Activated B cell treated with CpG ODN at 0.5 μM for 24 hours (primary cell): ENCODE measurements at regions of chr5 and their contacts with region 1.

Region 1: DNA sequence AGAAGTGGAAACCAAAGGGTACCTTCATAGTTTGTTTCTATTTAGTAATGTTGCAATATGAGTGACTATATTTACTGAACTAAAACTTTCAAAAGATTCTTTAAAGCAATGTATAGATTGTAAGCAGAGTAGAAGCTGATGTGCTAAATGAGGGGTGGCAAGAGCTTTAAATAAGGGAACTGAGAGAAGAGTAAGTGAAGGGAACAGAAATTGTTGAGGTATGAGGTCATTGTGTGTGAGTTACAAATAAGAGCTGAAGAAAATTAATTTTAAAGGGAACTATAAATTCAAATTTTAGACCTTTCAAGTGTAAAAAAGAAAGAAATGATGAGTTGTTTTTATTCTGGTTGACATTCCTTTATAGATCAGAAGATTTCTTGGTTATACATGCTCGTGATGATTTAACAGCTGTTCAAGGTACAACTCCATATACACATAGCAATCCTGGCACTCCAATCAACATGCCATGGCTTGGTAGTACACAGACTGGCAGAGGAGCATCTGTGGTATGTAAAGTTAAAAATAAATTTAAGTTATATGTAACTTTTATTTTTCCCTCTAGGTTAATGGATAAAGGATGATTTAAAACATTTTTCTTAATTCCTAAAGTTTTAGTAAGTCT is 135.1 kb upstream of the TNFAIP8 start:
- DNase-seq: no peak
- ATAC-seq: peak; percentile 97
- H3K4me3 Mint-ChIP-seq: peak overlapping the region; percentile 4
- H3K27ac Mint-ChIP-seq: peak overlapping the region; percentile 47
- H3K4me1 Mint-ChIP-seq: peaks cover 25% of the 10 kb centered on the region
- H3K27me3 Mint-ChIP-seq: no peaks in the 10 kb centered on the region
- CTCF ChIP-seq: no peak

Region 2: DNA sequence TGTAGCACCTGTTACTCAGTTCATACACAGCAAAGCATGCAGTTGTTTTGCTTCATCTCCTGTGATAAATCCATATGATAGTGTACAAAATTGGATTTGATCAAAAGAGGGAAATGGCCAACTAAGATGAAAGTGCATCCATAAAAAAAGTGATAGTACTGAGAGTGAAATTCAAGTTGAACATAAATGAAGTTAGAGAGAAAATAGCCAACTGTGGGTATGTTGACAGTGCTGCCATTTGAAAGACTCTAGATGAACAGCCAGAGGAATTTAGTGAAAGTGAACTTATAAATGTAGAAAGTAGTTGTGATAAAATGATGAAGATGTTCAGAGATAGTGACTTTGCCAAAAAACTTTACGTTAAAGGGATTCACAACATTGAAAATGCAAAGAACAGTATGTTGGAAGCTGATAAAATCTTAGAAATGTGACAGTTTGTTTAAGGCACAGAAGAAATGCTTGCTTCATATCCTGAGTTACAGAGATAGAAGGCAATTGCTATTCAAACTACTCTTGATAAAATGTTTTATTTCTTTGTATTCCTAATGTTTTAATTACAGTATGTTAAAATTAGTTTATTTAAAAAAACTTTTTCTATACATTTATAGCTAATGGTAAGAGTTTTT is 30.1 kb before region 1 on chr5:
- CTCF ChIA-PET with region 1: no interaction called
- POLR2A ChIA-PET with region 1: no interaction called
- intact Hi-C with region 1: loop called (anchors 2 kb)
- DNase-seq: no peak
- ATAC-seq: no peak
- H3K4me3 Mint-ChIP-seq: no peak overlapping the region
- H3K27ac Mint-ChIP-seq: no peak overlapping the region
- H3K4me1 Mint-ChIP-seq: peaks cover 20% of the 10 kb centered on the region
- H3K27me3 Mint-ChIP-seq: no peaks in the 10 kb centered on the region
- CTCF ChIP-seq: no peak

Region 3: DNA sequence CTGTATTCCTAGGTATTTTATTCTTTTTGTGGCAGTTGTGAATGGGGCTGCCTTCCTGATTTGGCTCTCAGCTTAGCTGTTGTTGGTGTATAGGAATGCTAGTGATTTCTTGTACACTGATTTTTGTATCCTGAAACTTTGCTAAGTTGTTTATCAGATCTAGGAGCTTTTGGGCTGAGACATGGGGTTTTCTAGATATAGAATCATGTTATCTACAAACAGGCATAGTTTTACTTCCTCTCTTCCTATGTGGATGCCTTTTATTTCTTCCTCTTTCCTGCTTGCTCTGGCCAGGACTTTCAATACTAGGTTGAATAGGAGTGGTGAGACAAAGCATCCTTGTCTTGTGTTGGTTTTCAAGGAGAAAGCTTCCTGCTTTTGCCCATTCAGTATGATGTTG is 19.9 kb before region 1 on chr5:
- CTCF ChIA-PET with region 1: interaction called, 4 read pairs
- POLR2A ChIA-PET with region 1: no interaction called
- intact Hi-C with region 1: loop called (anchors 1 kb)
- DNase-seq: no peak
- ATAC-seq: no peak
- H3K4me3 Mint-ChIP-seq: peak overlapping the region; percentile 11
- H3K27ac Mint-ChIP-seq: peak overlapping the region; percentile 70
- H3K4me1 Mint-ChIP-seq: peaks cover 32% of the 10 kb centered on the region
- H3K27me3 Mint-ChIP-seq: no peaks in the 10 kb centered on the region
- CTCF ChIP-seq: no peak

Region 4: GRCh38 chr5:119255571-119256356 is 35.1 kb after region 1 on chr5:
- CTCF ChIA-PET with region 1: no interaction called
- POLR2A ChIA-PET with region 1: no interaction called
- intact Hi-C with region 1: no loop called
- DNase-seq: no peak
- ATAC-seq: no peak
- H3K4me3 Mint-ChIP-seq: no peak overlapping the region
- H3K27ac Mint-ChIP-seq: no peak overlapping the region
- H3K4me1 Mint-ChIP-seq: peaks cover 2% of the 10 kb centered on the region
- H3K27me3 Mint-ChIP-seq: no peaks in the 10 kb centered on the region
- CTCF ChIP-seq: no peak

Region 5: DNA sequence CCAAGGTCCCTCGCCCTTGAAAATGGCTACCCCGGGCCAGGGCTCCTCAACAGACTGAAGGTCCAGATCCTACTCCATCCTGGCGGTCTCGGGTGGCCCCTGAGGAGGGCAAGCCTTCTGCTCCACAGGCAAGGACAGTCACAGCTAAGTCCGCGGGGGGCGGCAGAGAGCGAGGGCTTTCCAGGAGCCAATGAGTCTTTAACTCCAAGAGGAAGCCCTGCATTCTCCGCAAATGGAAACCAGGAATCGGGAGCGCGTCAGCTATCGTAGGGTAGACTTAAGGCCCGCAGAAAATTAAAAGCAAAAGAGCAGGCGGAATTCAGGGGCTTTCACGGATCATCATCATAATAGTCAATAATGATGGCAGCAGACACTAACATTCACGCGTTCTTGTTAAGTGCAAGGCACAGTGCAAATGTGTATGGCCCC is 47.3 kb after region 1 on chr5:
- CTCF ChIA-PET with region 1: no interaction called
- POLR2A ChIA-PET with region 1: no interaction called
- intact Hi-C with region 1: loop called (anchors 1 kb)
- DNase-seq: peak; percentile 62
- ATAC-seq: peak; percentile 65
- H3K4me3 Mint-ChIP-seq: peak overlapping the region; percentile 95
- H3K27ac Mint-ChIP-seq: peak overlapping the region; percentile 95
- H3K4me1 Mint-ChIP-seq: peaks cover 50% of the 10 kb centered on the region
- H3K27me3 Mint-ChIP-seq: no peaks in the 10 kb centered on the region
- CTCF ChIP-seq: no peak